ENCODE measurements at regions of chr9 and their contacts with region 1.

Region 1: GRCh38 chr9:98766586-98766985 is 29.8 kb downstream of the ANKS6 start:
- DNase-seq: no peak
- ATAC-seq: no peak
- H3K4me3 ChIP-seq: no peak overlapping the region
- H3K27ac ChIP-seq: no peak overlapping the region
- H3K4me1 ChIP-seq: no peaks in the 10 kb centered on the region
- H3K27me3 ChIP-seq: no peaks in the 10 kb centered on the region
- CTCF ChIP-seq: no peak

Region 2: DNA sequence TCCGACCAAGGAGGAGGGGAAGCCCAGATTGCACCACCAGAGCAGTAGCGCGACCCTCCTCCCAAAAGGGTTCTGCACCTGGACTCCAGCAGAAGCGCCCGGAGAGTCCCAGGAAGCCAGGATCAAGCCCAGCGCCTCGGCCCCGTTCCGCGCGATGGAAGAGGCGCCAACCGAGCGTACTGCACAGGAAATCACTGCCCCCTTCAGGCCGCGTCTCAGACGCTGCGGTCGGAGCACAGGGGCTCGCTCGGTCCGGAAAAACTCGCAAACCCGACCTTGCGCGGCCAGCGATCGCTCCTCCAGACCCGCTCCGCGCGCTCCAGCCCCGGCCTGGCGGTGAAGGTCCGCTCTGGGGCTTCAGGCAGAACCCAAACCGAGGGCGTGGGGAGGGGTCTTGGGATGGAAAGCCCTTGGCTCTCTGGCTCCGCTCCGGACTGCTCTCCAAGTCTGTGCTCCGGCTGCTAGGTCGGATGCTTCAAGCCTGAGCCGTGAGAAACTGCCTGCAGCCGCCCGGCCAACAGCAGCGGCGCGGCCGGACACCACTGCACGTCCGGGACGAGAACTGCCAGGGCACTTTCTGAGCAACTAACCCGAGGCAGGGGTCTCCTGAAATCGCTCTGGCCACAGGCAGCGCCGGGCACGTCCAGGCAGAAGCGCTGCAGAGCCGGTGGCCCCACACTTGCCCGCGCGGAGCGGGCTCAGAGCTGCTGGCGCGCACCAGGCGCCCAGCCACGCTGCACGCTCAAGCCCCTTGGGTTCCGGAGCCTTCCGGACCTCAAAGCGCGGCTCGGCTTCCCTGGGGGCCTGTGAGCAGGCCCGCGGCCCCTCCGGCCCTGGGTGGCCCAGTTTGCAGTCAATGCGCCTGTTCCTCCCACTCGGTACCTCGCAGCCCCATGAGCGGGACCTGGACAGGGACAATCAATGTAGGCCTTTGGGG is 59.2 kb before region 1 on chr9:
- intact Hi-C with region 1: loop called in 1 of 10 experiments (anchors 10 kb)
- DNase-seq: peak; percentile 28 to 29
- ATAC-seq: peak; percentile 63 to 91 (median 82)
- H3K4me3 ChIP-seq: peak overlapping the region in 8 of 10 donors; percentile 6 to 39 (median 27)
- H3K27ac ChIP-seq: no peak overlapping the region
- H3K4me1 ChIP-seq: peaks cover 3 to 22% (median 15%) of the 10 kb centered on the region in 9 donors
- H3K27me3 ChIP-seq: peaks cover 13 to 97% (median 94%) of the 10 kb centered on the region in 7 donors
- CTCF ChIP-seq: peak in 8 of 9 donors; percentile 38 to 66 (median 54)

Region 3: GRCh38 chr9:98860871-98861293 is 94.3 kb after region 1 on chr9:
- intact Hi-C with region 1: no loop called
- DNase-seq: peak; percentile 55 to 88
- ATAC-seq: peak; percentile 69 to 91 (median 88)
- H3K4me3 ChIP-seq: no peak overlapping the region
- H3K27ac ChIP-seq: peak overlapping the region in 8 of 10 donors; percentile 20 to 90 (median 82)
- H3K4me1 ChIP-seq: peaks cover 2 to 64% (median 45%) of the 10 kb centered on the region in 9 donors
- H3K27me3 ChIP-seq: no peaks in the 10 kb centered on the region
- CTCF ChIP-seq: peak; percentile 17 to 89 (median 65)